ENCODE measurements at regions of chr10 and their contacts with region 1.

Region 1: GRCh38 chr10:121959671-121960070 is 15.3 kb downstream of the NSMCE4A start:
- DNase-seq: no peak
- ATAC-seq: no peak
- H3K4me3 ChIP-seq: no peak overlapping the region
- H3K27ac ChIP-seq: no peak overlapping the region
- H3K4me1 ChIP-seq: no peaks in the 10 kb centered on the region
- H3K27me3 ChIP-seq: no peaks in the 10 kb centered on the region
- CTCF ChIP-seq: no peak
- POLR2A ChIP-seq: no peak

Region 2: DNA sequence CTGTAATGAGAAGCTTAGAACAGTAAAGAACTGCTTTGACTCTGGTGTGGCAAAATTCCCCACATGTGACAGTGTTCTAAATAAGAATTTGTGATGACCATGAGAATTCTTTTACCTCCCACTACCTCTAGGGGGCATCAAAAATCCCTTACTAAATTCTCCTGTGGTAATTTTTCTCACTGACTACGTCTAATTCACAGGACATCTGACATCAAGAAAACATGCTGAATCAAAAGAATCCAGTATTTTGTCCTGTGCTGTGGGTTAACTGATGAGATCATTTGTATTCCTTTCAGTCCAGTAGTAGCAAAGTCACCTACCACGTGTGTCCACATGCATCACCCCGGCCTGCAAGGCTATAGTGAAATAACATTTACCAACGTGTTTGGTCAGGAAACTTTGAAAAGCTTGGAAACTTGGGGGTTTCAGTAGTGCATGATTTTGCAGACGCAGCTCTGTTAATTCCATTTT is 135.6 kb before region 1 on chr10:
- intact Hi-C with region 1: no loop called
- DNase-seq: no peak
- ATAC-seq: no peak
- H3K4me3 ChIP-seq: no peak overlapping the region
- H3K27ac ChIP-seq: no peak overlapping the region
- H3K4me1 ChIP-seq: no peaks in the 10 kb centered on the region
- H3K27me3 ChIP-seq: no peaks in the 10 kb centered on the region
- CTCF ChIP-seq: peak; percentile 44 to 69 (median 59)
- POLR2A ChIP-seq: no peak

Region 3: GRCh38 chr10:122102869-122103525 is 143.3 kb after region 1 on chr10:
- intact Hi-C with region 1: loop called (anchors 10 kb)
- DNase-seq: no peak
- ATAC-seq: no peak
- H3K4me3 ChIP-seq: no peak overlapping the region
- H3K27ac ChIP-seq: no peak overlapping the region
- H3K4me1 ChIP-seq: no peaks in the 10 kb centered on the region
- H3K27me3 ChIP-seq: no peaks in the 10 kb centered on the region
- CTCF ChIP-seq: no peak
- POLR2A ChIP-seq: no peak